ENCODE measurements at regions of chr15 and their contacts with region 1.

Region 1: GRCh38 chr15:41022487-41023090 is 69.3 kb downstream of the CHAC1 start:
- DNase-seq: peak in 1 of 2 donors; percentile 70
- H3K4me3 ChIP-seq: no peak overlapping the region
- H3K27ac ChIP-seq: peak overlapping the region; percentile 51 to 76
- H3K4me1 ChIP-seq: peaks cover 5 to 31% of the 10 kb centered on the region in 2 donors
- H3K27me3 ChIP-seq: no peaks in the 10 kb centered on the region
- CTCF ChIP-seq: peak; percentile 67 to 87 (median 72)

Region 2: GRCh38 chr15:40857601-40858341 is 164.8 kb before region 1 on chr15:
- intact Hi-C with region 1: loop called (anchors 5 kb)
- DNase-seq: peak in 1 of 2 donors; percentile 82
- H3K4me3 ChIP-seq: no peak overlapping the region
- H3K27ac ChIP-seq: no peak overlapping the region
- H3K4me1 ChIP-seq: no peaks in the 10 kb centered on the region
- H3K27me3 ChIP-seq: no peaks in the 10 kb centered on the region
- CTCF ChIP-seq: peak; percentile 88 to 91 (median 91)

Region 3: DNA sequence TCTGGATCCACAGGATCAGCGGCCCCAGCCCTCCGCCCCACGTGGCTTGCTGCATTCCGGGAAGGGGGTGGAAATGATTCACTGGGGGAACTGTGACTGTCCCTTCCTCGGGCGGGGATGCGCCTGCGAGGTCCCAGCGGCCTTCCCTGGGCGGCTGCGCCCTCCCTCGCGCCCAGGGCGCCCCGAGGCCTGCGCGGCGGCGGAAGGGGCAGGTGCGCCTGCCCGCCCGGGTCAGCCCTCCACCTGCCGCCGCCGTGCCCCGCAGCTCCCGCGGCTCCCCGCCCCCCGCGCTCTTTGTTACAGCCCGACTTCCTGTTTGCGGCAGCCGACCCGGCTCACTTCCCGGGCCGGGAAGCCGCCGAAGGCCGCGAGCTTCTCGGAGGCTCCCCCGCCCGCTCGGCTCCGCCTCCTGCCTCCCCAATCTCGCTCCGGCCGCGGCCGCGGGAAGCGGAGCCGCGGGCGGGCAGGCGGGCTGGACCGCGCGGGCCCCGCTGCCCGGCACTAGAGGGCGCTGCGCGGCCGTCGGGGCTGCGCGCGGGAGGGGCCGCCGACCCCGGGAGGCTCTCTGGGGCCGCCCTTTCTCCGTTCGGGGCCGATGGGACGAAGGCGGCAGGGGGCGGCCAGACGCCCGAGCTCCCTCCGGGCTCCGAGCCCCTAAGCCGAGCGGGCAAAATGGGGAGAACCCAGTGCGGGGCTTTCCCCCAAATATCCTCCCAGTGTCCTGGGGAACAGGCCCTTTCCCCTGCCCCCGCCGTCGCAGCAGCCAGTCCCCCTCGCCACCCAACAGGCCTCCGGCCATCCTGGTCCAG is 80.9 kb before region 1 on chr15:
- intact Hi-C with region 1: loop called (anchors 1 kb)
- DNase-seq: peak in 1 of 2 donors; percentile 84
- H3K4me3 ChIP-seq: peak overlapping the region; percentile 69 to 70
- H3K27ac ChIP-seq: peak overlapping the region; percentile 77 to 88
- H3K4me1 ChIP-seq: peaks cover 0 to 17% of the 10 kb centered on the region in 2 donors
- H3K27me3 ChIP-seq: no peaks in the 10 kb centered on the region
- CTCF ChIP-seq: peak in 2 of 3 experiments; percentile 32 to 94

Region 4: GRCh38 chr15:40982855-40983254 is 39.7 kb before region 1 on chr15:
- intact Hi-C with region 1: loop called (anchors 2 kb)
- DNase-seq: peak in 1 of 2 donors; percentile 91
- H3K4me3 ChIP-seq: no peak overlapping the region
- H3K27ac ChIP-seq: peak overlapping the region; percentile 82 to 94
- H3K4me1 ChIP-seq: peaks cover 17 to 49% of the 10 kb centered on the region in 2 donors
- H3K27me3 ChIP-seq: no peaks in the 10 kb centered on the region
- CTCF ChIP-seq: peak in 2 of 3 experiments; percentile 26 to 31

Region 5: GRCh38 chr15:41055706-41056105 is 33.1 kb after region 1 on chr15:
- intact Hi-C with region 1: no loop called
- DNase-seq: no peak
- H3K4me3 ChIP-seq: no peak overlapping the region
- H3K27ac ChIP-seq: no peak overlapping the region
- H3K4me1 ChIP-seq: no peaks in the 10 kb centered on the region
- H3K27me3 ChIP-seq: no peaks in the 10 kb centered on the region
- CTCF ChIP-seq: no peak

Region 6: GRCh38 chr15:41066516-41066915 is 43.9 kb after region 1 on chr15:
- intact Hi-C with region 1: no loop called
- DNase-seq: no peak
- H3K4me3 ChIP-seq: no peak overlapping the region
- H3K27ac ChIP-seq: no peak overlapping the region
- H3K4me1 ChIP-seq: no peaks in the 10 kb centered on the region
- H3K27me3 ChIP-seq: no peaks in the 10 kb centered on the region
- CTCF ChIP-seq: no peak

Region 7: GRCh38 chr15:41180206-41180789 is 157.7 kb after region 1 on chr15:
- intact Hi-C with region 1: loop called (anchors 10 kb)
- DNase-seq: no peak
- H3K4me3 ChIP-seq: no peak overlapping the region
- H3K27ac ChIP-seq: no peak overlapping the region
- H3K4me1 ChIP-seq: no peaks in the 10 kb centered on the region
- H3K27me3 ChIP-seq: no peaks in the 10 kb centered on the region
- CTCF ChIP-seq: no peak